GM12878 (cell line): ENCODE measurements at regions of chr10 and their contacts with region 1.

Region 1: DNA sequence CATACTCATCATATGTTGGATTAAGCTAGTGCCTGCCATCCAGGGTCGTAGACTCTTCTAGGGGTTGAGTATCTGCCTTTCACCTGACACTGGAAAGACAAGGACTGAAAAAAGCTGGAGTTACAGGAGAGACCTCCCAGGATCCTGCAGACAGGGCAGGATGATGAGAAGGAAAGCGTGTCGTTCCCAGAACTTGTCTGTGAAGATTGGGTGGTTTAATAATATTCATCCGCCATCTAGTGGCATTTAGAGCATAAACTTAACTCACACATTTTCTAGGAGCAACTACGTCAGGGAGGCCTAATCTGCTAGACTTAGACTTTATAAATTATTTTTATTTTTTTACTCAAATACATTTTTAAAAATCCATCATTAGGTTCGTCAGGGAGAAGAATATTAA is 59.6 kb downstream of the ADRB1 start:
- DNase-seq: peak; percentile 23
- ATAC-seq: peak; percentile 68
- H3K4me3 ChIP-seq: no peak overlapping the region
- H3K27ac ChIP-seq: no peak overlapping the region
- H3K4me1 ChIP-seq: peaks cover 28% of the 10 kb centered on the region
- H3K27me3 ChIP-seq: no peaks in the 10 kb centered on the region; a peak in 2 of 4 replicates
- CTCF ChIP-seq: peak; percentile 39 to 79 (median 60); a peak in 5 of 6 replicates
- EP300 ChIP-seq: no peak
- POLR2A ChIP-seq: no peak
- RAD21 ChIP-seq: peak; percentile 91

Region 2: GRCh38 chr10:113704637-113705343 is 398.5 kb before region 1 on chr10:
- CTCF ChIA-PET with region 1: interaction called, 11 read pairs
- POLR2A ChIA-PET with region 1: no interaction called
- RAD21 ChIA-PET with region 1: interaction called, 9 read pairs
- SMC1A ChIA-PET with region 1: interaction called, 10 read pairs
- in situ Hi-C with region 1: loop called (anchors 5 kb)
- intact Hi-C with region 1: loop called (anchors 2 kb)
- DNase-seq: no peak
- ATAC-seq: peak; percentile 86
- H3K4me3 ChIP-seq: no peak overlapping the region
- H3K27ac ChIP-seq: no peak overlapping the region
- H3K4me1 ChIP-seq: peaks cover 6% of the 10 kb centered on the region; the same call in 1 of the 2 replicates
- H3K27me3 ChIP-seq: no peaks in the 10 kb centered on the region
- CTCF ChIP-seq: peak; percentile 52 to 67 (median 66); a peak in 5 of 6 replicates
- EP300 ChIP-seq: no peak
- POLR2A ChIP-seq: no peak
- RAD21 ChIP-seq: peak; percentile 70

Region 3: DNA sequence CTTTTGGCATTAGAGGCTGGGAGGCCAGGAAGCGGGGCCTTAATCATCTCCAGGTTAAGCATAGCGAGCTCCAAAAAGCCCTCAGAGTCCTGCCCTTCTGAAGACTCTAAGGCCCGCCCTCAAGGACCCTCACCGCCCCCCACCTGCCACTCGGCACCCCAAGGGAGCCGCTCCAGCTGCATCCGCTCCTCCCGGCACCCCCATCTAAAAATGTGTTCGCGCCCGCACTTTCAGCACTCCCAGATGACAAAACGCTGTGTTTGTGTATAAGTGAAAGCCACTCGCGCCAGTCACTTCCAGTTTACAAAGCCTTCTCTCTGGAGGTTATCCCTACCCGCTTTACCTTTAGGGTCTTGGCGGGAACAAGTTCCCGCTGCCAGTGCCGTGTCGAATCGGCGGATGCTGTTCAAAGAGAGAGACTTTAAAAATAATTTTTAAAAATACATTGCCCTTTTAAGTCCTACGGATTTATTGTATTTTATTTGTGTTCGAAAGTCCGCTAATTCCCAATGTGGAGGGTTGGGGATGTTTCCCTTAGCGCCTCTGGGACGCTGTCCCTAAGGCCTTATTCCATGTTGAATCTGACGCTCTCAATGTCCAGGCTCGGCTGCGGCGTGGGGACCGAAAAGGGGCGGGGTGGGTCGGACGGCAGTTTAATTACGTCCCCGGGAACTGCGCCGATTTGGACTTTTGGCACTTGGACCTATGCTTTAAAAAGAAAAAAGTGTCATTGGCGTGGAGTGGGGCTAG is 249.1 kb before region 1 on chr10 and contains the starts of genes DCLRE1A and NHLRC2:
- CTCF ChIA-PET with region 1: interaction called, 5 read pairs
- POLR2A ChIA-PET with region 1: interaction called, 4 read pairs
- RAD21 ChIA-PET with region 1: interaction called, 5 read pairs
- SMC1A ChIA-PET with region 1: interaction called, 6 read pairs
- in situ Hi-C with region 1: no loop called
- intact Hi-C with region 1: loop called (anchors 5 kb)
- DNase-seq: no peak
- ATAC-seq: peak; percentile 55
- H3K4me3 ChIP-seq: peak within 1 kb of the TSS; percentile 78
- H3K27ac ChIP-seq: peak within 1 kb of the TSS; percentile 92
- H3K4me1 ChIP-seq: peaks cover 4% of the 10 kb centered on the region; the same call in 1 of the 2 replicates
- H3K27me3 ChIP-seq: no peaks in the 10 kb centered on the region
- CTCF ChIP-seq: no peak
- EP300 ChIP-seq: peak in 1 of 2 experiments; percentile 99; a peak in 2 of 4 replicates
- POLR2A ChIP-seq: no peak
- RAD21 ChIP-seq: no peak
- polyA plus RNA-seq, gene DCLRE1A: 4.8 to 5.2 TPM
- polyA plus RNA-seq, gene NHLRC2: 1.9 to 3.9 TPM

Region 4: DNA sequence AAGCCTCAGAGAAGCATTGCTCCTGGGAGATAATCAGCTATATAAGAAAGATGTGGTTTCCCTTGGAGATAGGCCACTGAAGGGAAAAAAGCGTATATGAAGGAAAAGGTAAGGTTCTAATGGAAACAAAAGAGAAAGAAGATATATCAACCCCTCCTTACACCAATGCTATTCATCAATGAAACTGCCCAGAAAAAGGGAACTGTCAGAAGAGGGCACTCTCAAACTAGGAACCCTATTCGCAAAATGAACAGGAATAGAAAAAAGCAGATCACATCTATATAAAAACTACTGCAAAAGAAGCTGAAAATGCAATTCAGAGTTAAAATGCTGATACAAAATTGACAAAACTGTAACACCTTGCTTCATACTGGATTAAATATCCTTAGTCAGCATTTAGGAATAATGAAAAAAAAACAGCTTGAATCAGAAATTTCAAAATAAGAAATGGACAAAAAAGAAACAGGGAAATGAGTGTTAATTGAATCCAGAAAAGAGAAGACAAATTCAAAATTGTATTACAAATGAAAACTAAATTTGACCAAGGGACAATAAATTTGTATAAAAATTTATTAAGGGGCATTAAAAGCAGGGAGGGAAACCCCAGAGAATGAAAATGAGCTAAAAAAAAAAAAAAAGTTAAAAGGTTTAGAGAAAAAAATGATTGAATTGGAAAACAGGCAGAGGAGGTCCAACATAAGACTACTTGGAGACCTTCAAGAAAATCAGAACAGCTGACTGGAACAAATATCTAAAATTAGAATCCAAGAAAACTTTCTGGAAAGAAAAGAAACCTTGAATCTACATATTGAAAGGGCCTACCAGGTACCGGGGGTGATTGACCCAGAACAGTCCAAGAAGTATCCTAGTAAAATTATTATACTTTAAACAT is 230.9 kb before region 1 on chr10:
- CTCF ChIA-PET with region 1: interaction called, 23 read pairs
- POLR2A ChIA-PET with region 1: no interaction called
- RAD21 ChIA-PET with region 1: interaction called, 7 read pairs
- SMC1A ChIA-PET with region 1: interaction called, 15 read pairs
- in situ Hi-C with region 1: no loop called
- intact Hi-C with region 1: no loop called
- DNase-seq: no peak
- ATAC-seq: peak; percentile 60
- H3K4me3 ChIP-seq: no peak overlapping the region
- H3K27ac ChIP-seq: no peak overlapping the region
- H3K4me1 ChIP-seq: no peaks in the 10 kb centered on the region; the same call in 1 of the 2 replicates
- H3K27me3 ChIP-seq: no peaks in the 10 kb centered on the region
- CTCF ChIP-seq: peak in 2 of 3 experiments; percentile 11 to 36; a peak in 2 of 6 replicates
- EP300 ChIP-seq: no peak
- POLR2A ChIP-seq: no peak
- RAD21 ChIP-seq: peak; percentile 52

Region 5: GRCh38 chr10:113930482-113931057 is 172.7 kb before region 1 on chr10:
- CTCF ChIA-PET with region 1: interaction called, 4 read pairs
- POLR2A ChIA-PET with region 1: no interaction called
- RAD21 ChIA-PET with region 1: interaction called, 9 read pairs
- SMC1A ChIA-PET with region 1: interaction called, 12 read pairs
- in situ Hi-C with region 1: no loop called
- intact Hi-C with region 1: no loop called
- DNase-seq: no peak
- ATAC-seq: no peak
- H3K4me3 ChIP-seq: no peak overlapping the region
- H3K27ac ChIP-seq: no peak overlapping the region
- H3K4me1 ChIP-seq: no peaks in the 10 kb centered on the region; the same call in 1 of the 2 replicates
- H3K27me3 ChIP-seq: no peaks in the 10 kb centered on the region
- CTCF ChIP-seq: no peak
- EP300 ChIP-seq: no peak
- POLR2A ChIP-seq: no peak
- RAD21 ChIP-seq: no peak